ENCODE measurements at regions of chr2 and their contacts with region 1.

Region 1: GRCh38 chr2:210002158-210003157 is at the start of gene RPE:
- DNase-seq: peak; percentile 96
- ATAC-seq: peak; percentile 99
- H3K4me3 Mint-ChIP-seq: peak within 1 kb of the TSS; percentile 96
- H3K27ac Mint-ChIP-seq: peak within 1 kb of the TSS; percentile 89
- H3K4me1 Mint-ChIP-seq: peaks cover 55% of the 10 kb centered on the region
- H3K27me3 Mint-ChIP-seq: peaks cover 3% of the 10 kb centered on the region
- CTCF ChIP-seq: no peak
- total RNA-seq, gene RPE: 43.3 and 54.7 TPM in 2 replicates

Region 2: DNA sequence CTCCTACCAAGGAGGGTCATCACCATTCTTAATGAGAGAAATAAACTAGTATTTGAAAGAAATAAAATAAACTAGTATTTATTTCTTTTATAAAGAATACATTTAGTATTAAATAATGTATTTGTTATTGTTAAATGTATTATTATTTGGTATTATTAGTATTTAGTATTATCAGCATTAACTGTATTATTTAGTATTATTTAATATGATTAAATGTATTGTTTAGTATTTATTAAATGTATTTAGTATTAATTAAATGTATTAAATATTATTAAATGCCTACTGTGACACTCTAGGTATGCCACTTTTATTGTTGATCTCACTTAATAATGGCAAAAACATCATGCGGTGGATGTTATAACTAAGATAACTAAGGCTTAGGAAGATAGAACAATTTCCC is 932.2 kb before region 1 on chr2:
- CTCF ChIA-PET with region 1: no interaction called
- POLR2A ChIA-PET with region 1: no interaction called
- intact Hi-C with region 1: no loop called
- DNase-seq: no peak
- ATAC-seq: no peak
- H3K4me3 Mint-ChIP-seq: no peak overlapping the region
- H3K27ac Mint-ChIP-seq: no peak overlapping the region
- H3K4me1 Mint-ChIP-seq: no peaks in the 10 kb centered on the region
- H3K27me3 Mint-ChIP-seq: no peaks in the 10 kb centered on the region
- CTCF ChIP-seq: no peak

Region 3: DNA sequence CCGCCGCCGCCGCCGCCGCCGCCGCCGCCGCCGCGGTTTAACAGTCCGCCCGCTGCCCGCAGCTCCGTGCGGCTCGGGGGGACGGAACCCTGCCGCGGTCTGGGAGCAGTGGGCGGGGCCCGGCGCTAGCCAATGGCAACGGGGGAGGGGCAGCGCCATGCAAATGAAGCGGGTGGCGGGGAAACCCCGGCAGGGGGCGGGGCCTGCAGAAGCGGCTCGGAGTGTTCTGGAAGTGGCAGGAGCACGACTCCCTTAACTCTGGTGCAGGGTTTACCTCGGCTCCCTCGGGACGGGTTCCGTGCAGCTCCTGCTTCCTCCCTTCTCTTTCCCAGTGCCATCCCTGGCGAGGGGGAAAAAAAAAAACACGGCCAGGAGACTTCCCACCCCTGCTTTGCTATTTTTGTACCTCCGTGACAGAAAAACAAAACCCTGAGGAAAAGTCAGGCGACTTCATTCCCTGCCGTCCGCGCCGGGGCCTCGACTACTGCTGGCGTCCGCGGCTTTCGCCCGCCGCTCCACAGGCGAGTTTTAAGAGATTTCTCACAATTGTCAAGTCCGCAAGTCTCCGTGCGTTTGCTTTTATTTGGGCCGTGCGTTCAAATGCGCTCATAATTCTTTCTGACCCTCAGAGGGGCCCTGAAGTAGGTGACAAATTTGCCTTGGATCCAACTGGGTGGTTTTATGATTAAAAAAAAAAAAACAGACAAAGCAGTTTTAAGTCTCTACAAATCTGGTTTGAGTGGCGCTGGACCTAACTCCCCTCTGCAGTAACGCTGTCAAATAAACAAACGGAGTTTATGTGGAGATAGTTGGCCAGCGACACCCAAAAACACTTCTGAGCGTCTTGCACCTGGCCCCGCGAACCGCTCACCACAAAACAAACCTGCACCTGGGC is 169.1 kb after region 1 on chr2 and contains the start of gene KANSL1L:
- CTCF ChIA-PET with region 1: no interaction called
- POLR2A ChIA-PET with region 1: interaction called, 4 read pairs
- intact Hi-C with region 1: loop called (anchors 1 kb)
- DNase-seq: peak; percentile 99
- ATAC-seq: peak; percentile 83
- H3K4me3 Mint-ChIP-seq: peak within 1 kb of the TSS; percentile 97
- H3K27ac Mint-ChIP-seq: peak within 1 kb of the TSS; percentile 94
- H3K4me1 Mint-ChIP-seq: peaks cover 24% of the 10 kb centered on the region
- H3K27me3 Mint-ChIP-seq: peaks cover 8% of the 10 kb centered on the region
- CTCF ChIP-seq: no peak
- total RNA-seq, gene KANSL1L: 13.1 and 14.2 TPM in 2 replicates

Region 4: DNA sequence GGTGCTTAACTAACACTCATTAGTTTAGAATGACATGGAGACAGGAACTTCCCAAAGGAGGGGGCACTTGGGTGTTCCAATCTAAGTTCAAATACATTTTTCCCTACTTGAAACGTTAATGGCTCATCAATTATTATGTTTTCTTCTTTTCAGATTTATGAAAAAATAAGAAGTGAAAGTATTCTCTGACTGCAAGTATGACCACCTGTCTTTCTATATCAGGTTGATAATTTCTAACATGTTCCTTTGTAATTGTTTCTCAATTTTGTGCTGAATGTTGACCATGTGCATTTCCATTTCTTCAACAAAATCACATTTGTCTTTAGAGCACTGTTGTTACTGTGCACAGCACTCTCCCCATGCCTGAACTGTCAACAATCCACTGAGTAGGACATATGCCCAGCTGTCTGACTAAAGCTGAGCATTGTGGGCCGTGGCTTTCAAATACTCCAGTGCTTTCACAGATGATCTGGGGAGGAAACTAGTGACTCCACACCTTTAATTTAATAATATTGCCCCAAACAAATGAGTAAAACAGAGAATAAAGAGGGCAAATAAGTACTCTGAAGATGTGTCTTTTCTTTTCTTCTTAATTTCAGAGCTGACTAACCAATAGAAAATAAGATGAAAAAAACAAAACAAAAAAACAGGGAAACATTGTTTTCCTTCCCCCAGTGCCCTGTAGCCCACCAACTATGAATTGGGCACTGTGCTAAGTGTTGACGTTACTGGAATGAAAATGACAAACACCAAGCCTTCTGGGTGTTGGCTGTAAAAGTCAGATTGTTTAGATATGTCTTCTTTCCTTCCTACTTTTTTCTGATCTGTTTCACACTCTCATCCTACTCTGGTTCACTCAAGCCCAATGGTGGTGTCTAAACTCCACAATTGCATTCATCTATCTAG is 458.1 kb after region 1 on chr2:
- CTCF ChIA-PET with region 1: no interaction called
- POLR2A ChIA-PET with region 1: no interaction called
- intact Hi-C with region 1: loop called (anchors 5 kb)
- DNase-seq: no peak
- ATAC-seq: peak; percentile 20
- H3K4me3 Mint-ChIP-seq: peak overlapping the region; percentile 61
- H3K27ac Mint-ChIP-seq: peak overlapping the region; percentile 87
- H3K4me1 Mint-ChIP-seq: peaks cover 68% of the 10 kb centered on the region
- H3K27me3 Mint-ChIP-seq: no peaks in the 10 kb centered on the region
- CTCF ChIP-seq: no peak

Region 5: DNA sequence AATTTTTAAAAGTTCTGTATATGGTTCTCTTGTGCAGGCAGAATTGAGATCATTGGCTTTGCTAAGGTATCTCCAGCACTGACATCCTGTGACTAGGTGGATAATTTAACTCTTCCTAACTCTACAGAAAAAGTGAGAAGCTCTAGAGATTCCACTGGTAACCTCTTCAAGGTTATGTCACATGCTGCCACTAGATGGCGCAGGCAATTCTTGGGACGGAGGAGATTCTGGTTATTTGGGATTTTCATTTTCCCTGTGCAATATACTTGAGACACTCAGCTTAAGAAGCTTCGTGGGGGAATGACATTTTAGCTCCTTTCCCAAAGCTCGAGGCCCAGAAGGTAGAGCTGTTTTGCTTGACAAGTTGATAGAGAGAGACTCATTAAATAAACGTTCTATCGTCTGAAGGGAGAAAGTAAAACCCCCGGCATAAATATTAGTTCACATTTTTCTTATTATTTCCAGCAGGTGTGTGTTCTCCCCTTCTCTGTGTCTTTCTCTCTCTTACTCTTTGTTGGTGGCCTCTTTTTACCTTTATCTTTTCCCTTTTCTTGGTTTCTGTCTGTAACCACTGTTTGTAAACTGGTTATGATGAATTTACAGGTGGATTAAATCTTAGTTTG is 500.7 kb after region 1 on chr2:
- CTCF ChIA-PET with region 1: no interaction called
- POLR2A ChIA-PET with region 1: no interaction called
- intact Hi-C with region 1: no loop called
- DNase-seq: no peak
- ATAC-seq: peak; percentile 49
- H3K4me3 Mint-ChIP-seq: peak overlapping the region; percentile 63
- H3K27ac Mint-ChIP-seq: no peak overlapping the region
- H3K4me1 Mint-ChIP-seq: peaks cover 6% of the 10 kb centered on the region
- H3K27me3 Mint-ChIP-seq: peaks cover 22% of the 10 kb centered on the region
- CTCF ChIP-seq: peak; percentile 98